ENCODE measurements at regions of chr10 and their contacts with region 1.

Region 1: DNA sequence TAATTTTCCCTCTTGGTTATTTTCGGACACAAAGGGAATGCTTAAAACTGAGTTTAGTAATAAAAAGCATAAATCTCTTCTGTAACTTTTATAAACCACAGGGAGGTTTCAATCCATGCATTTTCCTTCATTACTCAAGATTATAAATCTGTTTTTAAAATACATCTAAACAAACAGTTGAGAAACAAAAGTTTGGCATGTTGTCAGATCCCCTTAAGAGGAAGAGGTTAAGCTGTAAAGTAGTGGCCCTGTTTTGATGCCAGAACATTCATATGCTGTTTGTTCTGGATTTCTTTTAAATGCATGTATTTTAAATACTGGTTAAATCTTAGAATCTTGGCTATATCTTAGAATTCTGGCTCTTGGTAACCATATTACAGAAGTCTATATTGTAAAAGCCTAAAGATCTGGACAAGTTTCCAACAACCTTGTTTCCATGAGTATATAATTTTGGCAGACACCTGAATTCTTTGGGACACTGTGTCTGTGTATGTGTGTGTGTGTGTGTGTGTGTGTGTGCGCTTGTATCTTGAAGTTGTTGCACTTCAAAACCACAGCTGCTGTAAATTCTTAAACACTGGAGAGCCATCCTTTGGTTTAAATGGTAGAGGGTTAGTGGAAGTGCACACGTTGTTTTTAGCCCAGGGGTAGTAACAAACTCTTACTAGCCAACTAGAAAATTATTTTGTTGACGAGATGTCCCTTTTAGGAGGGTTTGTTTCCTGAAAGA is 6.8 kb upstream of the SEMA4G start:
- DNase-seq: no peak
- H3K4me3 ChIP-seq: no peak overlapping the region
- H3K27ac ChIP-seq: no peak overlapping the region
- H3K4me1 ChIP-seq: no peaks in the 10 kb centered on the region
- H3K27me3 ChIP-seq: no peaks in the 10 kb centered on the region
- CTCF ChIP-seq: no peak
- EP300 ChIP-seq: no peak
- POLR2A ChIP-seq: no peak

Region 2: GRCh38 chr10:100890673-100891317 is 71.7 kb before region 1 on chr10:
- intact Hi-C with region 1: no loop called
- DNase-seq: no peak
- H3K4me3 ChIP-seq: no peak overlapping the region
- H3K27ac ChIP-seq: peak overlapping the region in 1 of 4 donors; percentile 31
- H3K4me1 ChIP-seq: peaks cover 0 to 8% (median 0%) of the 10 kb centered on the region in 4 donors
- H3K27me3 ChIP-seq: peaks cover 0 to 12% (median 10%) of the 10 kb centered on the region in 3 donors
- CTCF ChIP-seq: no peak
- EP300 ChIP-seq: no peak
- POLR2A ChIP-seq: no peak

Region 3: GRCh38 chr10:100927266-100927665 is 35.2 kb before region 1 on chr10:
- intact Hi-C with region 1: loop called (anchors 5 kb)
- DNase-seq: no peak
- H3K4me3 ChIP-seq: no peak overlapping the region
- H3K27ac ChIP-seq: no peak overlapping the region
- H3K4me1 ChIP-seq: no peaks in the 10 kb centered on the region
- H3K27me3 ChIP-seq: no peaks in the 10 kb centered on the region
- CTCF ChIP-seq: no peak
- EP300 ChIP-seq: no peak
- POLR2A ChIP-seq: no peak

Measured in sigmoid colon (tissue), 7 donors.